Endothelial cell of umbilical vein (primary cell): ENCODE measurements at regions of chr12 and their contacts with region 1.

Region 1: GRCh38 chr12:47651368-47652254 is 54.2 kb downstream of the RPAP3 start:
- DNase-seq: peak; percentile 66
- H3K4me3 ChIP-seq: no peak overlapping the region
- H3K27ac ChIP-seq: no peak overlapping the region
- H3K4me1 ChIP-seq: no peaks in the 10 kb centered on the region
- H3K27me3 ChIP-seq: no peaks in the 10 kb centered on the region
- CTCF ChIP-seq: peak; percentile 39 to 50
- POLR2A ChIP-seq: no peak

Region 2: DNA sequence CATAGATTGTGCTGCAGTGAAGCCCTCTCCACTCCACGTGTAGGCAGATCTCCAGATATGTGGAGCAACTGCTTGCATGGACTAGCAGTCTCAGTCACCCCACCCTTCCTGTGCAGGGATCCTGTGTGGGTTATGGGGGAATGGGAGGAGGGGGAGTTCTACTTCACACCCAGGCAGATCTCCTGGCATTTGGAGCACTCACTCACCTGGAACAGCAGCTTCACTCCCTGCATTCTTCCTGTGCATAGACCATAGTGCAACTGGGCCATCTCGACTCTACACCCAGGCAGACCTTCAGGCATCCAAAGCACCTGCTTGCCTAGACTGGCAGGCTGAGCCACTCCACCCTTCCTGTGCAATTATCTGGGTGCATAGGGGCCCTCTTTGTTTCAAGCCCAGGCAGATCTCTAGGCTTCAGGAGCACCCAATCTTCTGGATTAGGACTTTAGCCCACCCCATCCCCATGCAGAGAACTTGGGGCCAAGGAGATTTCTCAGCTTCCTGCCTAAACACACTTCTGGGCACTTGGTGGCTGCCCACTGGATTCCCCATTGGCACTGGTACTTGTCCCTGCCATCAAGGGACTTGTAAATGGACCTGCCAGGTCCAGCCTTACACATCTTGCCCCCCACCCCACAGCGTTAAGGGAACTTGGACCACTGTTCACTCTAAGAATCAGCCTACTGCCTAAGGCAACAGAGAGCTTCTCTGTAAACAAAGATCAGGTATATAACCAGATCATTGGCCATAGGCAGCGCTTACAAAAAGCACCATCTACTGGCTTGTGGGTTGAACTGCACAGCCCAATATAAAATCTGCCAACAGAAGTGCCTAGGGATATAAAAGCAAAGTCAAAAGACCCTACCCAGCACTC is 668.0 kb before region 1 on chr12:
- CTCF ChIA-PET with region 1: no interaction called
- POLR2A ChIA-PET with region 1: no interaction called
- dilution Hi-C with region 1: no loop called
- intact Hi-C with region 1: no loop called
- DNase-seq: peak; percentile 71
- H3K4me3 ChIP-seq: no peak overlapping the region
- H3K27ac ChIP-seq: no peak overlapping the region
- H3K4me1 ChIP-seq: no peaks in the 10 kb centered on the region
- H3K27me3 ChIP-seq: peaks cover 0 to 8% of the 10 kb centered on the region in 2 experiments
- CTCF ChIP-seq: peak; percentile 75 to 76
- POLR2A ChIP-seq: no peak

Region 3: DNA sequence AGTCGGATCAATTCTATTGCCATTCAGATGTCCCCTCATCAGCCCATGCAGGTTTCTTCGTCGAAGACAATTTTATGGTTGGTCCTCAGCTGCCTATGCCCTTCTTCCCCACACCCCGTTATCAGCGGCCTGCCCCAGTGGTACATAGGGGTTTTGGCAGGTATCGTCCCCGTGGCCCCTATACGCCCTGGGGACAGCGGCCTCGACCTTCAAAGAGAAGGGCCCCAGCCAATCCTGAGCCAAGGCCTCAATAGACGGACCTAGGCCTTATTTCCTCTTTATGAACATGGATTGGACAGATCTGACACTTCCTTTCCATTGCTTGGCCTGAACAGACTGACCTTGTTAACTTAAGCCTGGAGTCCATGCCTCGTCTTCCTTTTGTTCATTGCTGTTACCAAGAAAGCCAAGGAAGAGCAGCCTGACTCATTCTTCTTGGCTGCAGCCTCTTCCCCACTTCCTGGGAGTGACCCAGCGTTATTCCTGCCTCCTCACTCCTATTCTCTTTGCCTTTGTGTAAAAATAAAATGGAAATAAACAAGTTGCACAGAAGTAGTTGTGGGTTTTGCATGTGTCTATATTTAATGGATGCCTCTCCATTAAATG is 415.4 kb before region 1 on chr12:
- CTCF ChIA-PET with region 1: no interaction called
- POLR2A ChIA-PET with region 1: no interaction called
- dilution Hi-C with region 1: no loop called
- intact Hi-C with region 1: no loop called
- DNase-seq: no peak
- H3K4me3 ChIP-seq: no peak overlapping the region
- H3K27ac ChIP-seq: no peak overlapping the region
- H3K4me1 ChIP-seq: peaks cover 6% of the 10 kb centered on the region
- H3K27me3 ChIP-seq: no peaks in the 10 kb centered on the region
- CTCF ChIP-seq: no peak
- POLR2A ChIP-seq: no peak

Region 4: GRCh38 chr12:47672068-47672467 is 20.5 kb after region 1 on chr12:
- CTCF ChIA-PET with region 1: interaction called, 20 read pairs
- POLR2A ChIA-PET with region 1: no interaction called
- dilution Hi-C with region 1: no loop called
- intact Hi-C with region 1: no loop called
- DNase-seq: no peak
- H3K4me3 ChIP-seq: no peak overlapping the region
- H3K27ac ChIP-seq: no peak overlapping the region
- H3K4me1 ChIP-seq: no peaks in the 10 kb centered on the region
- H3K27me3 ChIP-seq: no peaks in the 10 kb centered on the region
- CTCF ChIP-seq: no peak
- POLR2A ChIP-seq: no peak

Region 5: GRCh38 chr12:47767216-47767724 is 115.7 kb after region 1 on chr12:
- CTCF ChIA-PET with region 1: interaction called, 13 read pairs
- POLR2A ChIA-PET with region 1: no interaction called
- dilution Hi-C with region 1: no loop called
- intact Hi-C with region 1: loop called (anchors 2 kb)
- DNase-seq: peak; percentile 66
- H3K4me3 ChIP-seq: no peak overlapping the region
- H3K27ac ChIP-seq: no peak overlapping the region
- H3K4me1 ChIP-seq: peaks cover 6% of the 10 kb centered on the region
- H3K27me3 ChIP-seq: no peaks in the 10 kb centered on the region
- CTCF ChIP-seq: peak; percentile 64 to 66
- POLR2A ChIP-seq: no peak

Region 6: GRCh38 chr12:47779301-47779942 is 127.8 kb after region 1 on chr12:
- CTCF ChIA-PET with region 1: interaction called, 4 read pairs
- POLR2A ChIA-PET with region 1: no interaction called
- dilution Hi-C with region 1: no loop called
- intact Hi-C with region 1: loop called (anchors 1 kb)
- DNase-seq: peak; percentile 88
- H3K4me3 ChIP-seq: no peak overlapping the region
- H3K27ac ChIP-seq: no peak overlapping the region
- H3K4me1 ChIP-seq: peaks cover 32% of the 10 kb centered on the region
- H3K27me3 ChIP-seq: no peaks in the 10 kb centered on the region
- CTCF ChIP-seq: peak; percentile 89 to 96
- POLR2A ChIP-seq: no peak